Posterior vena cava (tissue), 2 donors: ENCODE measurements at regions of chr20 and their contacts with region 1.

Region 1: DNA sequence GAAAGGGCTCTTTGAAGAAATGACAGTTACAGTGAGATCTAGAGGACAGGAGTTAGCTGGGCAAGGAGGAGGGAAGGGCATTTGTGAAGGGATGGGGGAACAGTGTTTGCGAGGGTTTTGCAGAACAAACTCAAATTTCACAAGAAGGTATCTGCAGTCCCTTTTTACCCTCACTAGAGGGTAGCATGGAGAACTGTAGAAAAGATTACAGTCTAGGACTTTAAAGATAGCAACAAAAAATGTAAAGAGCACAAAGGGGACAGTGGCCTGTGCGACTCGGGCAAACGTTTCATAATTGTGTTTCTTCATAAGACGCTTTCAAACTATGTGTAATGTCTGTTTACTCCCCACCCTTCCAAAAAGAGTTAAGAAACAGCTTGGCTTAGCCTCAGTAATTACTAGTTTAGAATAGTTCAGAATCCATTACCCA is 21.2 kb upstream of the ASXL1 start:
- DNase-seq: no peak

Region 2: GRCh38 chr20:32652739-32653526 is 316.0 kb after region 1 on chr20:
- intact Hi-C with region 1: loop called in 1 of 2 experiments (anchors 2 kb)
- DNase-seq: peak; percentile 94